ENCODE measurements at regions of chr22 and their contacts with region 1.

Region 1: DNA sequence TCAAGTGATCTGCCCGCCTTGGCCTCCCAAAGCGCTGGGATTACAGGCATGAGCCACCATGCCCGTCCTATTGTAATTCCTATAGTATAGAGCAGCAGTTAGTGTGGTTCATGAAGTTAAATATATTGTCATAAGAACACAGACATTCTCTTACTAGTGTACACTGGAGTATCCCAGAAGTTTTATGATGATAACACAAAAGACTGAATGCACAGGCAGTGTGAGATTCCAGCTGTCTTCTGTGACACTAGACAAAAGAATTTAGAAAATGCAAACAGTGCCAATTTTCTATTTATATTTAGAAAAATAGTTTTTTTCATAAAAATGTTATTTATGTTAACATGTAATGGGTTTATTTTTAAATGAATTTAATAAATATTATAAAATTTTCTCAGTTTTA is 39.4 kb upstream of the RBX1 start:
- DNase-seq: no peak
- ATAC-seq: no peak
- H3K4me3 Mint-ChIP-seq: no peak overlapping the region
- H3K27ac Mint-ChIP-seq: no peak overlapping the region
- H3K4me1 Mint-ChIP-seq: no peaks in the 10 kb centered on the region
- H3K27me3 Mint-ChIP-seq: no peaks in the 10 kb centered on the region
- CTCF ChIP-seq: no peak

Region 2: DNA sequence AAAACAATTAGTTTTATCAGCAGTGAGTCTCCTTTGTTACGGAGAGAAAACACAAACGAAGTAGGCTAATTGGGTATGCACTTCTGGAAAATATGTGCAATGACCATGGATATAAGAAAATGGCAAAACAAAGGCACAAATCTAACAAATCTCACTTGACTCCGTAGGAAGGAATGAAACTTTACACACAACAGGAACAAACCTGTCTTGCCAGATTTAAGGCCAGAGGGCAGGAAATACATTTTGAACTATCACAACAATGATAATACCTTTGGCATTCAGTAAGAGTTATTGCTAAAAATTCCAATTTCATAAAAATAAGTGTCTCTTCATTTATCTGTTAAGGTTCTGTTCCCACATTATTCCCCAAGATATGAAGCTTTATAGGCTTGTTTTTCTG is 129.3 kb before region 1 on chr22:
- CTCF ChIA-PET with region 1: no interaction called
- POLR2A ChIA-PET with region 1: interaction called, 10 read pairs
- intact Hi-C with region 1: no loop called
- DNase-seq: no peak
- ATAC-seq: no peak
- H3K4me3 Mint-ChIP-seq: no peak overlapping the region
- H3K27ac Mint-ChIP-seq: no peak overlapping the region
- H3K4me1 Mint-ChIP-seq: no peaks in the 10 kb centered on the region
- H3K27me3 Mint-ChIP-seq: no peaks in the 10 kb centered on the region
- CTCF ChIP-seq: no peak

Region 3: DNA sequence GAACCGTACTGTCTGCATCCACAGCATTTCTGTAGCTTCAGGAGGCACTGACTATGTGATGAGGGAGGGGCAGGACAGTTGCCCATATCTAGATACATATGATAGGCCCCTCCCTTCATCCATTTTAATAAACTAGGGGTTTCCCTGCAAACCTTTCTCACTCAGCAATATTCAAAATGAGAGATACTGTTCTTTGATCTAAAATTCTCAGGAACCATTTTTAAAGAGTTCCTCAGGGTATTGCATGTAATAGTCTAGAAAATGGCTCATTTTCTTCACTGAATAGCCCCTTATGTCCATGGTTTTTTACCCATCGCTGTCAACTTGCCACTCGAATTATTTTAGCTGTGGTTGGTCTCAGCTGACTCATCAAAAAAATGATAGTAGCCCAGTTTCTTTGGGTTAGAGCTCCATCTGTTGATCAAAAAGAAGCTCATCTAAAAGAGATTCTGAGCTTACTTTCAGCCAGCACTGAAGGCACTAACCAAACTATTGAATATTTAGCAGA is 12.9 kb before region 1 on chr22:
- CTCF ChIA-PET with region 1: no interaction called
- POLR2A ChIA-PET with region 1: no interaction called
- intact Hi-C with region 1: no loop called
- DNase-seq: no peak
- ATAC-seq: peak; percentile 71
- H3K4me3 Mint-ChIP-seq: no peak overlapping the region
- H3K27ac Mint-ChIP-seq: peak overlapping the region; percentile 21
- H3K4me1 Mint-ChIP-seq: peaks cover 3% of the 10 kb centered on the region
- H3K27me3 Mint-ChIP-seq: no peaks in the 10 kb centered on the region
- CTCF ChIP-seq: no peak

Region 4: GRCh38 chr22:40955571-40955970 is 43.8 kb after region 1 on chr22:
- CTCF ChIA-PET with region 1: no interaction called
- POLR2A ChIA-PET with region 1: no interaction called
- intact Hi-C with region 1: no loop called
- DNase-seq: no peak
- ATAC-seq: no peak
- H3K4me3 Mint-ChIP-seq: no peak overlapping the region
- H3K27ac Mint-ChIP-seq: no peak overlapping the region
- H3K4me1 Mint-ChIP-seq: peaks cover 27% of the 10 kb centered on the region
- H3K27me3 Mint-ChIP-seq: no peaks in the 10 kb centered on the region
- CTCF ChIP-seq: no peak